HepG2 (cell line): ENCODE measurements at regions of chr3 and their contacts with region 1.

Region 1: GRCh38 chr3:114706591-114707232 is 412.9 kb downstream of the TIGIT start:
- DNase-seq: peak; percentile 94
- ATAC-seq: peak; percentile 97
- H3K4me3 ChIP-seq: peak overlapping the region; percentile 30 to 49 (median 41); a peak in 5 of 6 replicates
- H3K27ac ChIP-seq: peak overlapping the region; percentile 67
- H3K4me1 ChIP-seq: peaks cover 37% of the 10 kb centered on the region
- H3K27me3 ChIP-seq: no peaks in the 10 kb centered on the region
- CTCF ChIP-seq: peak; percentile 25
- EP300 ChIP-seq: peak in 1 of 2 experiments; percentile 95; a peak in 2 of 4 replicates
- POLR2A ChIP-seq: no peak
- RAD21 ChIP-seq: no peak

Region 2: DNA sequence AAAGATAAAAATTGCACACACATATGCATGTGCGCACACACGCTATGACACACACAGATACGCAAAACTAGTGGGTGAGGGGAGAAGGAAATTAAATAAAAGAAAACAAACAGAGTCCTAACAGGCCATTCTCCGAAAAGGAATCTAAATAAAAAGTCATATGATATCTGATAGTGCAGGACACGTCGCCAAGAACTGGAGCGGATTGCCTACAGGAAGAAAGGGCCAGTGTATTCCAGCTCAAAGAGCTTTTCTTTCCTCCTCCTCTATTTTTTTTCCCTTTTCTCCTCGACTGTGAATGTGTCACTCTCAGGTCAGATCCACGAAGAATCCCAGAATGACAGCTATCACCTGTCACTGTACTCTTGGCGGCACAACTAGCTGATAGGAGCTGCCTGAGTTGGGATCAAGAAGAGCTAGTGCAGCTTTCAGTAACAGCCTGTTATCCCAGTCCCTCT is 255.1 kb before region 1 on chr3:
- CTCF ChIA-PET with region 1: no interaction called
- POLR2A ChIA-PET with region 1: no interaction called
- in situ Hi-C with region 1: no loop called
- intact Hi-C with region 1: no loop called
- DNase-seq: peak; percentile 3
- ATAC-seq: no peak
- H3K4me3 ChIP-seq: no peak overlapping the region
- H3K27ac ChIP-seq: no peak overlapping the region
- H3K4me1 ChIP-seq: no peaks in the 10 kb centered on the region
- H3K27me3 ChIP-seq: no peaks in the 10 kb centered on the region
- CTCF ChIP-seq: no peak
- EP300 ChIP-seq: no peak
- POLR2A ChIP-seq: no peak
- RAD21 ChIP-seq: no peak

Region 3: DNA sequence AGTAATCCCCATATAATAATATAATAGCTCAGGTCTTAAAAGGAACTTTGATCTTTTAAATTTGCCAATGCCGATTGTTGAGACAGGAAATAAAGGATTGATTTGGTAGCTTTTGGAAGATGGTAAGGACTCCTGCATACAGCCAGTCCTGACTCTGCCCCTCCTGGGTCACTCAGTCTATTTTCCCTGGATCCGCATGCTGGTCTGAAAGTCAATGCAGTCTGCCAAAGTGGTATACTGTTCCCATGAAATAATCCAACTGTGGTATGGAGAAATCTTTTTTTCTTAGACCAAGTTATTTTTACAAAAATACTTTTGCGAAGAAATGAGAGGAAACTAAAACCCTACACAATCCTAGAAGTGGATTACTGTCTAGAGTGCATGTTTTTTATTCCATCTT is 221.8 kb before region 1 on chr3:
- CTCF ChIA-PET with region 1: no interaction called
- POLR2A ChIA-PET with region 1: no interaction called
- in situ Hi-C with region 1: no loop called
- intact Hi-C with region 1: no loop called
- DNase-seq: no peak
- ATAC-seq: no peak
- H3K4me3 ChIP-seq: no peak overlapping the region
- H3K27ac ChIP-seq: no peak overlapping the region
- H3K4me1 ChIP-seq: peaks cover 9% of the 10 kb centered on the region
- H3K27me3 ChIP-seq: no peaks in the 10 kb centered on the region
- CTCF ChIP-seq: no peak
- EP300 ChIP-seq: no peak
- POLR2A ChIP-seq: no peak
- RAD21 ChIP-seq: no peak

Region 4: DNA sequence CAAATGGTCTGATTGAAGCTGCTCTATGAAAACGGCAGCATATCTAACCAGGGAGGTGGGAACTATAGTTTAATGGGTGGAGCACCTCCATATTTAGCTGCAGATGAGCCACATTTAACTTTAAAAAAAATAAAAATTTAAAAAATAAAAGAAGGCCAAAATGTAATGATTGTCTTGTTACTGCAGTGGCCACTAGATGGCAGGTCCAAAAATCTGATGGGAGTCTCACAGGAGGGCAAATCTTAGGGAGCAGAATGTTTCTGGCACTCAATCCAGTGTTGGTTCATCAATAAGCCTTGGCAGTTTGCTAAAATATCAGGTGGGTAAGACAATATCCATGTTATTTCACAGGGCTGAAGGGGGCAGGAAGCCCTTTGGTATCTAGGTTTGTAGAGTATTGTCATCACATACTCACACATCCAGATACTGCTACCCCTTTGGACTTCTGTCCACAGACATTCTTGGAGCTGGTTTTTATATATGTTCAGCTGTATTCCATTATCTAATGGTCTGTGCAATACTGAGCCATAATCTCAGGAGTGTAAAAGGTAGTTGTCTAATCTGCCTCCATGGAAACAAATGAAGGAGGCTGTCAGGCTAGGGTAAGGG is 179.6 kb before region 1 on chr3:
- CTCF ChIA-PET with region 1: no interaction called
- POLR2A ChIA-PET with region 1: no interaction called
- in situ Hi-C with region 1: no loop called
- intact Hi-C with region 1: loop called (anchors 10 kb)
- DNase-seq: peak; percentile 9
- ATAC-seq: peak; percentile 59
- H3K4me3 ChIP-seq: no peak overlapping the region
- H3K27ac ChIP-seq: no peak overlapping the region
- H3K4me1 ChIP-seq: peaks cover 4% of the 10 kb centered on the region; the same call in 1 of the 2 replicates
- H3K27me3 ChIP-seq: no peaks in the 10 kb centered on the region
- CTCF ChIP-seq: peak; percentile 37
- EP300 ChIP-seq: no peak
- POLR2A ChIP-seq: no peak
- RAD21 ChIP-seq: no peak

Region 5: GRCh38 chr3:114624571-114625181 is 82.0 kb before region 1 on chr3:
- CTCF ChIA-PET with region 1: no interaction called
- POLR2A ChIA-PET with region 1: no interaction called
- in situ Hi-C with region 1: no loop called
- intact Hi-C with region 1: loop called (anchors 2 kb)
- DNase-seq: peak; percentile 87
- ATAC-seq: peak; percentile 96
- H3K4me3 ChIP-seq: peak overlapping the region; percentile 52 to 71 (median 57)
- H3K27ac ChIP-seq: peak overlapping the region; percentile 76
- H3K4me1 ChIP-seq: peaks cover 39% of the 10 kb centered on the region
- H3K27me3 ChIP-seq: no peaks in the 10 kb centered on the region
- CTCF ChIP-seq: no peak
- EP300 ChIP-seq: peak in 1 of 2 experiments; percentile 56; a peak in 1 of 4 replicates
- POLR2A ChIP-seq: peak; percentile 40 to 89; a peak in 3 of 4 replicates
- RAD21 ChIP-seq: no peak

Region 6: GRCh38 chr3:114660124-114660523 is 46.6 kb before region 1 on chr3:
- CTCF ChIA-PET with region 1: no interaction called
- POLR2A ChIA-PET with region 1: no interaction called
- in situ Hi-C with region 1: no loop called
- intact Hi-C with region 1: no loop called
- DNase-seq: no peak
- ATAC-seq: no peak
- H3K4me3 ChIP-seq: no peak overlapping the region
- H3K27ac ChIP-seq: no peak overlapping the region
- H3K4me1 ChIP-seq: peaks cover 14% of the 10 kb centered on the region
- H3K27me3 ChIP-seq: no peaks in the 10 kb centered on the region
- CTCF ChIP-seq: no peak
- EP300 ChIP-seq: no peak
- POLR2A ChIP-seq: no peak
- RAD21 ChIP-seq: no peak

Region 7: GRCh38 chr3:114730397-114730796 is 23.7 kb after region 1 on chr3:
- CTCF ChIA-PET with region 1: no interaction called
- POLR2A ChIA-PET with region 1: interaction called, 3 read pairs
- in situ Hi-C with region 1: no loop called
- intact Hi-C with region 1: loop called (anchors 2 kb)
- DNase-seq: peak; percentile 43
- ATAC-seq: no peak
- H3K4me3 ChIP-seq: no peak overlapping the region
- H3K27ac ChIP-seq: no peak overlapping the region
- H3K4me1 ChIP-seq: peaks cover 20% of the 10 kb centered on the region
- H3K27me3 ChIP-seq: no peaks in the 10 kb centered on the region
- CTCF ChIP-seq: no peak
- EP300 ChIP-seq: no peak
- POLR2A ChIP-seq: no peak
- RAD21 ChIP-seq: no peak

Region 8: DNA sequence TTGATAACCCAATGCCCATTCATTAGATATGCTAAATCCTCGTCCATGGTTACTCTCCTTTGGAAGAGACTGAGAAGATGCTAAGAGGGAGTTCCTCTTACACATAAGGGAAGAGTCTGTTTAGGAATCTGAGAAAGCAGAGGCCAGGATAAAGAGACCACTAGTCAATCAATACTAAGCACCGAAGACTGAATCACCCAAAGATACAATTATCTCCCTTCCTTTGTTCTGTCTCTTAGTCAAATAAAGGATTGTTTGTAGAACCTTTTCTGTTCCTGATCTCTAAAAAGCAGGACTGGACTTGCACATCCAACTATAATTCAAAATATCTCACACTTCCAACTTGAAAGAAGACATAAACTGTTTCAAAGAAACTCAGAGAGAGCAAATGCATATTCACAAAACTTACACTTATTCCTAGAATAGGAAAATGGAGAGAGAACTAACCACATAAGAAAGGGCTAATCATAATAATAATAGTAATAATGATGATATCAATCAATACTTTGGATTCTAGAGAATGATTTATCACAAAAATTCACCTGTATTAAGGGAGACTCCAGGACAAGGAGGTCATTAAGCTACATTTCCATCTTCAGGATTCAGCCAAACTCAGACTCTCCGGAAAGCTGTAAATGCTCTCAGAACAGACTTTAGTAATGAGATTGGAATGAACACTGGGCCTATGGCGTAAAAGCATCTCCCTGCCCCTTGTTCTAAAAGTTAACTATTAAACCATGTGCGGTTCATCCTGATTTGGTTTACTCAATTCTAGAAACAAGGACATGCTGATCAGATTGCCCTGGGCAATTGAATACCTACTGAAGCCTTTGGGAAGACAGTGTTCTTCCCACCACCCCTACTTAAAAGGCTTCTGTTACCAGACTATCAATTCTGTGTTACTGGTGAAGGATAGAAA is 38.9 kb after region 1 on chr3:
- CTCF ChIA-PET with region 1: no interaction called
- POLR2A ChIA-PET with region 1: interaction called, 4 read pairs
- in situ Hi-C with region 1: no loop called
- intact Hi-C with region 1: loop called (anchors 2 kb)
- DNase-seq: peak; percentile 91
- ATAC-seq: peak; percentile 100
- H3K4me3 ChIP-seq: peak overlapping the region; percentile 39 to 55 (median 46); a peak in 5 of 6 replicates
- H3K27ac ChIP-seq: peak overlapping the region; percentile 54
- H3K4me1 ChIP-seq: peaks cover 46% of the 10 kb centered on the region
- H3K27me3 ChIP-seq: no peaks in the 10 kb centered on the region
- CTCF ChIP-seq: no peak
- EP300 ChIP-seq: peak in 1 of 2 experiments; percentile 56; a peak in 1 of 4 replicates
- POLR2A ChIP-seq: no peak
- RAD21 ChIP-seq: no peak

Region 9: GRCh38 chr3:115113367-115113766 is 406.7 kb after region 1 on chr3:
- CTCF ChIA-PET with region 1: no interaction called
- POLR2A ChIA-PET with region 1: no interaction called
- in situ Hi-C with region 1: no loop called
- intact Hi-C with region 1: no loop called
- DNase-seq: no peak
- ATAC-seq: 0 out of 3 replicates have a peak, but pooled peaks have one; percentile 28
- H3K4me3 ChIP-seq: no peak overlapping the region
- H3K27ac ChIP-seq: no peak overlapping the region
- H3K4me1 ChIP-seq: no peaks in the 10 kb centered on the region
- H3K27me3 ChIP-seq: no peaks in the 10 kb centered on the region
- CTCF ChIP-seq: no peak
- EP300 ChIP-seq: no peak
- POLR2A ChIP-seq: no peak
- RAD21 ChIP-seq: no peak